Left ventricle myocardium superior (tissue), 1 donor: ENCODE measurements at regions of chr17 and their contacts with region 1.

Region 1: GRCh38 chr17:52827526-52827925 is 669.0 kb upstream of the CA10 start:
- DNase-seq: no peak
- ATAC-seq: no peak

Region 2: GRCh38 chr17:52524096-52524637 is 303.4 kb before region 1 on chr17:
- intact Hi-C with region 1: loop called (anchors 10 kb)
- DNase-seq: no peak
- ATAC-seq: no peak

Region 3: GRCh38 chr17:52762147-52762793 is 65.3 kb before region 1 on chr17:
- intact Hi-C with region 1: loop called (anchors 10 kb)
- DNase-seq: peak; percentile 19
- ATAC-seq: peak; percentile 46

Region 4: DNA sequence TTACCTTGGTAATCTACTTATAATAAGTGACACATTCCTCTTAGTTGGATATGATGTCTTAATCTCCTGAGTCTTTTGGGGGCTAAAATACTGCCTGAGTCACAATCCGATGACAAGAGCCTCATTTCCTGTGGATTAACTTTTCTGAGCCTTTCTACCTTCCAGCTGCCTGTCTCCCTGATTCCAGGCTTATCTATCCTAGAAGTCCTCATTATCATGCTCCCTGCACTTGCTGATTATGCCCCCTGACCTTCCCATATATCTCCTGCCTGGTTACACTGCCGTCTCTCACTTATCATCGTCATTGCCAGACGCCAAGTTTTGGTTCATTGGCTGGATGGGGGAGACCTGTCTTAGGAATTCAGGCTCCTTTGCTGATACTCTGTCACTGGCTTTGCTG is 58.4 kb after region 1 on chr17:
- intact Hi-C with region 1: no loop called
- DNase-seq: no peak
- ATAC-seq: no peak

Region 5: GRCh38 chr17:53061446-53061845 is 233.9 kb after region 1 on chr17:
- intact Hi-C with region 1: no loop called
- DNase-seq: no peak
- ATAC-seq: no peak